ENCODE measurements at regions of chr17 and their contacts with region 1.

Region 1: DNA sequence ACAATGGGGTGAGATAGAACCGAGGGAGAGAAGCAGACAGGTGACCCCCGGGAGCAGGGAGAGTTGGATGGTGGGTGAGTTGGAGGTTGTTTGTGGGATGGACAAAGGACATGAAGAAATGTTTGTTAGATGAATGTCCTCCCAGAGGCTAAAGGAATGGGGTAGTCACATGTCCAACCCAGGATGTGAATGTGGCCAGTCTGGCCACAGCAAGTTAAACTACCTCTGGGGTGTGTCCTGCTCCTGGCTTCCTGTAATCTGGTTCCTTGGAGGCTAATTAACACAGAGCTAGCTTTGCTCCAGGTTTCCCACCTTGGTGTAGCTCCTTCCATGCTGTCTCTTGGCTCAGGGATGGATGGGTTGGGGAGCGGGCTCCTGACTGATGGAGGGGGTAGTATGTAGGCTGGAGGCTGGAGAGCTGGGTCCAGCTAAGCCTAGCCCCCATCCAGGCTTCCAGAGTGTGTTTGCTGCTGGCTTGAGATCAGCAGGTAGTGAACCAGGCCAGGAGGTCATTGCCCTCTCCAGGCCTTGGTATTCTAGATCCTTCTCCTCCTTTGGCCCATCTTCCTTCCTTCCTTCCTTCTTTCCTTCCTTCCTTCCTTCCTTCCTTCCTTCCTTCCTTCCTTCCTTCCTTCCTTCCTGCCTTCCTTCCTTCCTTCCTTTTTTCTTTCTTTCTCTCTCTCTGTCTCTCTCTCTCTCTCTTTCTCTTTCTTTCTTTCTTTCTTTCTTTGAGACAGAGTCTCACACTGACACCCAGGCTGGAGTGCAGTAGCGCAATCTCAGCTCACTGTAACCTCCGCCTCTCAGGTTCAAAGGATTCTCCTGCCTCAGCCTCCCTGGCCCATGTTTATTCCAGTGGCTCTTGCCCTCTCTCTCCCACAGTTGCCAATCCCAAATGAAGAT is 28.0 kb upstream of the UBE2G1 start:
- DNase-seq: no peak
- H3K4me3 ChIP-seq: no peak overlapping the region
- H3K4me3 Mint-ChIP-seq: peak overlapping the region; percentile 54
- H3K27ac Mint-ChIP-seq: peak overlapping the region; percentile 89
- H3K4me1 ChIP-seq: no peaks in the 10 kb centered on the region
- H3K4me1 Mint-ChIP-seq: peaks cover 7% of the 10 kb centered on the region
- H3K27me3 ChIP-seq: no peaks in the 10 kb centered on the region
- H3K27me3 Mint-ChIP-seq: no peaks in the 10 kb centered on the region
- CTCF ChIP-seq: no peak

Region 2: GRCh38 chr17:4236456-4236855 is 158.0 kb before region 1 on chr17:
- CTCF ChIA-PET with region 1: interaction called, 10 read pairs
- POLR2A ChIA-PET with region 1: no interaction called
- intact Hi-C with region 1: no loop called
- DNase-seq: no peak
- H3K4me3 ChIP-seq: no peak overlapping the region
- H3K4me3 Mint-ChIP-seq: no peak overlapping the region
- H3K27ac Mint-ChIP-seq: no peak overlapping the region
- H3K4me1 ChIP-seq: peaks cover 9% of the 10 kb centered on the region
- H3K4me1 Mint-ChIP-seq: peaks cover 7% of the 10 kb centered on the region
- H3K27me3 ChIP-seq: no peaks in the 10 kb centered on the region
- H3K27me3 Mint-ChIP-seq: no peaks in the 10 kb centered on the region
- CTCF ChIP-seq: no peak

Measured in Caco-2 (cell line).